SK-N-SH (cell line): ENCODE measurements at regions of chr9 and their contacts with region 1.

Region 1: DNA sequence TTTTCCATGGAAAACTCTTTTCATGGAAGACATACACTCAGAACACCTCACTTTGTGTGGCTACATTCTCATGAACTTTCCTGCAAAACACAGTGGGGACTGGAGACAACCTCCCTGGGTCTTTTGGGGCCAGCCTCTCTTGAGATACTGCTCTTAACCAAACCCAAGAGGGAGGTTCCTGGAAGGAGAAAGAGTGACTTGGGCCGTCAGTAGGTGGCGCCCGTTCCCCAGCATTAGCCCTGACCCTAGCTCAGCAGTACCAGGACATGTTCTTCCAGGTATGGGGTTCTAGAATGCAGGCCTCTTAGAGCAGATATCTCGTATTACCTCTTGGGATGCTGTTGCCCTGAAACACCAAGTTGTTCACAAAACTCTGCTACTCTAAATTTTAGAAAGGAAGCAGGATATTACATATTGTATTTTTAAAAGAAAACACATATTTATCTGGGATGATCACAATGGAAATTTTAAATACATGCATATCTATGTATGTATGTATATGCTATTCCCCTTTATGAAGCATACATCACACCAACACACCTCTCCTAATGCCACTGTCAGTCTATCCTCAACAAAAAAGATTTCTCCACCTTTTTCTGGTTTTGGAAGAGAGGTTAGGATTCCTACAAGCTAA is 15.8 kb upstream of the GLIS3 start:
- DNase-seq: peak; percentile 76
- H3K4me3 ChIP-seq: peak overlapping the region in 1 of 2 experiments; percentile 24; a peak in 1 of 4 replicates
- H3K27ac ChIP-seq: no peak overlapping the region
- H3K4me1 ChIP-seq: peaks cover 3 to 14% of the 10 kb centered on the region in 2 experiments; a peak in 2 of 4 replicates
- H3K27me3 ChIP-seq: no peaks in the 10 kb centered on the region
- CTCF ChIP-seq: peak; percentile 92
- EP300 ChIP-seq: no peak
- RAD21 ChIP-seq: peak; percentile 92

Region 2: GRCh38 chr9:4301971-4302427 is 13.7 kb before region 1 on chr9:
- CTCF ChIA-PET with region 1: interaction called, 17 read pairs
- POLR2A ChIA-PET with region 1: no interaction called
- DNase-seq: no peak
- H3K4me3 ChIP-seq: peak overlapping the region in 1 of 2 experiments; percentile 2; a peak in 1 of 4 replicates
- H3K27ac ChIP-seq: peak overlapping the region in 1 of 2 experiments; percentile 99; a peak in 2 of 4 replicates
- H3K4me1 ChIP-seq: peaks cover 9 to 18% of the 10 kb centered on the region in 2 experiments; a peak in 2 of 4 replicates
- H3K27me3 ChIP-seq: no peaks in the 10 kb centered on the region
- CTCF ChIP-seq: no peak
- EP300 ChIP-seq: peak in 1 of 2 experiments; percentile 50; a peak in 1 of 4 replicates
- RAD21 ChIP-seq: no peak

Region 3: DNA sequence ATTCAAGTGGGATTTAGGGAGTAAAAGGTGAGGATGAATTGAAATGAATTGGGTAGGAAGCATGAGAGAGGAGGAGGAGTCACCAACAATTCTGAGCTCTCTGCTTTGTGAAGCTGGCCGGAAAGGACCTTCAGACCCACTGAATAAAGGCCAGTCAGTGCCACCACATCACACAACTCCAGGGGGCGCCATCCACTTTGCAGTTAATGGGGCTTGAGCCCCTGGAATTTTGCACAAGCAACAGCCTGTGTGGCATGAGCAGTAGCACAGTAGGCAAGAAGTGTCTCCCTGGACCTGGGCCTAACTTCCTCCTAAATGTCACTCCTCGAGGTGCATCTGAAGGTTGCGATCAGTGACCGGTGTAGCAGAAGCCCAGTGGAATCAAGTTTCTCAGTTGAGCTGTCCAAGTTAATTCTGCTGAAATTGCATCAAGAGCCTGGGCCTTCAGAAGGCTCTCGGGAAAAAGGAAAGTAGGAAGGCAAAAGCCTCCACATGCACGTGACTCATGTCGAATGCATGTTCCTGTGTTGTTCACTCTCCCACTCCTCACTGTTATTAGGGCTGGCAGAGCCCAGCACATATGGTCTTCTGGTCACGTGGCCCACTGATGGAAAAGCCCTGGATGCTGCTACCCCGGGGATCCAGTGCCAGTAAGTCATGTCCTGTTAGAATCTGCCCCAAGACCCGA is 11.9 kb after region 1 on chr9:
- CTCF ChIA-PET with region 1: interaction called, 18 read pairs
- POLR2A ChIA-PET with region 1: no interaction called
- DNase-seq: no peak
- H3K4me3 ChIP-seq: no peak overlapping the region
- H3K27ac ChIP-seq: peak overlapping the region; percentile 1 to 72; a peak in 3 of 4 replicates
- H3K4me1 ChIP-seq: peaks cover 3 to 7% of the 10 kb centered on the region in 2 experiments; a peak in 2 of 4 replicates
- H3K27me3 ChIP-seq: no peaks in the 10 kb centered on the region
- CTCF ChIP-seq: peak; percentile 64
- EP300 ChIP-seq: peak in 1 of 2 experiments; percentile 44; a peak in 1 of 4 replicates
- RAD21 ChIP-seq: no peak

Region 4: GRCh38 chr9:4366591-4367330 is 51.1 kb after region 1 on chr9:
- CTCF ChIA-PET with region 1: interaction called, 22 read pairs
- POLR2A ChIA-PET with region 1: no interaction called
- DNase-seq: peak; percentile 12
- H3K4me3 ChIP-seq: no peak overlapping the region
- H3K27ac ChIP-seq: no peak overlapping the region
- H3K4me1 ChIP-seq: no peaks in the 10 kb centered on the region; a peak in 1 of 4 replicates
- H3K27me3 ChIP-seq: no peaks in the 10 kb centered on the region
- CTCF ChIP-seq: peak; percentile 76
- EP300 ChIP-seq: no peak
- RAD21 ChIP-seq: peak; percentile 68

Region 5: GRCh38 chr9:4375424-4376200 is 59.9 kb after region 1 on chr9:
- CTCF ChIA-PET with region 1: interaction called, 22 read pairs
- POLR2A ChIA-PET with region 1: interaction called, 4 read pairs
- DNase-seq: peak; percentile 27
- H3K4me3 ChIP-seq: no peak overlapping the region
- H3K27ac ChIP-seq: peak overlapping the region in 1 of 2 experiments; percentile 63; a peak in 2 of 4 replicates
- H3K4me1 ChIP-seq: no peaks in the 10 kb centered on the region; a peak in 1 of 4 replicates
- H3K27me3 ChIP-seq: no peaks in the 10 kb centered on the region
- CTCF ChIP-seq: peak; percentile 80
- EP300 ChIP-seq: no peak
- RAD21 ChIP-seq: peak; percentile 89

Region 6: DNA sequence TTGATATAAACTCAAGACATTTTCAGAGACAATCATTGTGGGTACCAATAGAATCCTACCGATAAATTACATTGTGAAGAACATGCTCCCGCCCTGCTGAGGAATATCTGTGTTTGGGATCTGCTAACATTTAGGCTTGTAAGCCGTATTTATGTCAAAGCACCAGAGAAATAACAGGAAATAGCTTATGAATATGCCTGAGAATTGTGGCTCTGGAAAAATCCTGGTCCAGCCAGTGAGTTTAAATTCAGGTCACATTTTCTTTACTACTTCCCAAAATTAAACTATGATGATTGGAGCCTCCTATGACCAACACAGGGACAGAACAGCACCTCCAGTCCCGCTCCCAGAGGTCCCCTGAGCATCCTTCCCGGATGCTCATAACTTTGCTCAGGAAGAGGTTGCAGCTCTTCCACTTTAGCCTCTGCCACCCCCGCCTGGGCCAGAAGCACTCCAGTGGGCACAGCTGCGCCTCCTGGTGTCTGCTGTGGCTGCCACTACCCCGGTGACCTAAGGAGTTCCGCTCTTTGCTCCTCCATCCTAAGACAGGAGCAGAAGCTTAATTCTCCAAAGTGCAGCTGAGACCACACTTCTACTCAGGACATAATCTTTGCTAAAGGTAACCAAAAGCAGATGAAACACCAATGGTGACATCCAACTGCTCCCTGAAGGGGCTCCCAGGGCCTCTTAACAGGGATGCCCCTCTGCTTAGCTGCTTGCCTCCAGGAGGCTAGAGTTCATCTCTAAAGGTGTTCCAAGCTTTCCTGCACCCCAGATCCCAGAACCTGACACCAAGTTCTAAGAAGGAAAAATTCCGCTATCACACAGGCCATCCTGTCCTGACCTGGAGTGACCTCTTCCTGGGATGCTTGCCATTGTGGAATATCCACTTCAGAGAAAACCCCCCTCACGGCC is 233.4 kb after region 1 on chr9:
- CTCF ChIA-PET with region 1: no interaction called
- POLR2A ChIA-PET with region 1: no interaction called
- DNase-seq: peak; percentile 16
- H3K4me3 ChIP-seq: no peak overlapping the region
- H3K27ac ChIP-seq: no peak overlapping the region
- H3K4me1 ChIP-seq: peaks cover 0 to 4% of the 10 kb centered on the region in 2 experiments; a peak in 1 of 4 replicates
- H3K27me3 ChIP-seq: no peaks in the 10 kb centered on the region
- CTCF ChIP-seq: peak; percentile 48; the same call in 1 of the 2 replicates
- EP300 ChIP-seq: no peak
- RAD21 ChIP-seq: peak; percentile 25